WTC11 (cell line): ENCODE measurements at regions of chr12 and their contacts with region 1.

Region 1: GRCh38 chr12:46234000-46234399 is 34.8 kb downstream of the SLC38A1 start:
- DNase-seq: no peak
- ATAC-seq: no peak
- H3K4me3 Mint-ChIP-seq: no peak overlapping the region
- H3K27ac Mint-ChIP-seq: peak overlapping the region; percentile 64
- H3K4me1 Mint-ChIP-seq: peaks cover 10% of the 10 kb centered on the region
- H3K27me3 Mint-ChIP-seq: no peaks in the 10 kb centered on the region
- CTCF ChIP-seq: no peak

Region 2: GRCh38 chr12:46185686-46186085 is 48.3 kb before region 1 on chr12:
- CTCF ChIA-PET with region 1: no interaction called
- POLR2A ChIA-PET with region 1: interaction called, 11 read pairs
- DNase-seq: no peak
- ATAC-seq: no peak; the same call in 1 of the 2 replicates
- H3K4me3 Mint-ChIP-seq: no peak overlapping the region
- H3K27ac Mint-ChIP-seq: no peak overlapping the region
- H3K4me1 Mint-ChIP-seq: peaks cover 14% of the 10 kb centered on the region
- H3K27me3 Mint-ChIP-seq: no peaks in the 10 kb centered on the region
- CTCF ChIP-seq: no peak

Region 3: GRCh38 chr12:46372544-46373110 is 138.6 kb after region 1 on chr12 and contains the start of gene SLC38A2:
- CTCF ChIA-PET with region 1: no interaction called
- POLR2A ChIA-PET with region 1: no interaction called
- DNase-seq: peak; percentile 96
- ATAC-seq: peak; percentile 81
- H3K4me3 Mint-ChIP-seq: peak within 1 kb of the TSS; percentile 98
- H3K27ac Mint-ChIP-seq: peak within 1 kb of the TSS; percentile 98
- H3K4me1 Mint-ChIP-seq: peaks cover 49% of the 10 kb centered on the region
- H3K27me3 Mint-ChIP-seq: no peaks in the 10 kb centered on the region; the same call in 1 of the 2 replicates
- CTCF ChIP-seq: no peak
- total RNA-seq, gene SLC38A2: 295 to 381 TPM (median 309 TPM) in 3 replicates